Ascending aorta (tissue), 2 donors: ENCODE measurements at regions of chr3 and their contacts with region 1.

Region 1: DNA sequence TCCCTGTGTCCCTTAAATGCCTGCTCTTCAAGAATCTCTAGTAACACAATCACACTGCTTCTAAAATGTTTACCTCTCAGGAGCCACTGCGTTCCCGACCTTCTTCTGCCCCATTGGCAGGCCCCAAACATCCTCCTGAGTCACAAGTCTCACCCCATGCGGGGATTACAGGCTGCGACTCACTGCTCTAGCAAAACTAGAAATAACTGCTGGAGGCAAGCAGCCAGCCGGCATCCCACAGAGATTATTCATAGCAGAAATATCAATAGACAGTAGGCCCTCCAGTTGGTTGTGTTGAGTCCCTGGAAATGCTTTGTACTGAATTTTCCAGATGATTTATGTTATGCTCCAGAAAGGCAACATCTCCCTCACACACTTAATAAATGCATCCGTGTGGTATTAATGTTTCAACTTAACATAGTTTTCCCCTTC is 64.8 kb downstream of the RFTN1 start:
- DNase-seq: peak; percentile 43 to 95
- H3K4me3 ChIP-seq: peak overlapping the region in 1 of 2 donors; percentile 21
- H3K27ac ChIP-seq: peak overlapping the region; percentile 69 to 84
- H3K4me1 ChIP-seq: peaks cover 10 to 35% of the 10 kb centered on the region in 2 donors
- H3K27me3 ChIP-seq: no peaks in the 10 kb centered on the region
- CTCF ChIP-seq: no peak

Region 2: DNA sequence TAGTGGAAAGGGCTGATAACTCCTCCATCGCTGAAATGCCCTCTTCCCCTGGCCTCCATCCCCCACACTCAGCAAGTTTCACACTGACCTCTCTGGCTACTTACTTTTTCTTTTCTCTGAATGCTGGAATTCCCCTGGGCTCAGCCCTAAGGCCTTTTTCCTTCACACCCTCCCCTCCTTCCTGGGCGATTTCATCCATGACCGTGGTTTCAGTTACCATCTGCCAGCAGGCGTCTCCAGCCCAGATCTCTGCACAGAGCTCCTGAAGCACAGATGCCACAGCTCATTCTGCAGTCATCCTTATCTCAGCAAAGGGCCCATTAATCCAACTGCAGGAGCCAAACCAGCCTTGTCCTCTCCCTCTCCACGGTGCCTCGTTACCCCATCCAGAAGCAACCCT is 49.2 kb before region 1 on chr3:
- intact Hi-C with region 1: loop called (anchors 5 kb)
- DNase-seq: no peak
- H3K4me3 ChIP-seq: peak overlapping the region in 1 of 2 donors; percentile 8
- H3K27ac ChIP-seq: peak overlapping the region; percentile 41 to 57
- H3K4me1 ChIP-seq: peaks cover 0 to 12% of the 10 kb centered on the region in 2 donors
- H3K27me3 ChIP-seq: no peaks in the 10 kb centered on the region
- CTCF ChIP-seq: peak in 2 of 3 experiments; percentile 3 to 29